Naive thymus-derived CD8-positive, alpha-beta T cell (primary cell): ENCODE measurements at regions of chr1 and their contacts with region 1.

Region 1: DNA sequence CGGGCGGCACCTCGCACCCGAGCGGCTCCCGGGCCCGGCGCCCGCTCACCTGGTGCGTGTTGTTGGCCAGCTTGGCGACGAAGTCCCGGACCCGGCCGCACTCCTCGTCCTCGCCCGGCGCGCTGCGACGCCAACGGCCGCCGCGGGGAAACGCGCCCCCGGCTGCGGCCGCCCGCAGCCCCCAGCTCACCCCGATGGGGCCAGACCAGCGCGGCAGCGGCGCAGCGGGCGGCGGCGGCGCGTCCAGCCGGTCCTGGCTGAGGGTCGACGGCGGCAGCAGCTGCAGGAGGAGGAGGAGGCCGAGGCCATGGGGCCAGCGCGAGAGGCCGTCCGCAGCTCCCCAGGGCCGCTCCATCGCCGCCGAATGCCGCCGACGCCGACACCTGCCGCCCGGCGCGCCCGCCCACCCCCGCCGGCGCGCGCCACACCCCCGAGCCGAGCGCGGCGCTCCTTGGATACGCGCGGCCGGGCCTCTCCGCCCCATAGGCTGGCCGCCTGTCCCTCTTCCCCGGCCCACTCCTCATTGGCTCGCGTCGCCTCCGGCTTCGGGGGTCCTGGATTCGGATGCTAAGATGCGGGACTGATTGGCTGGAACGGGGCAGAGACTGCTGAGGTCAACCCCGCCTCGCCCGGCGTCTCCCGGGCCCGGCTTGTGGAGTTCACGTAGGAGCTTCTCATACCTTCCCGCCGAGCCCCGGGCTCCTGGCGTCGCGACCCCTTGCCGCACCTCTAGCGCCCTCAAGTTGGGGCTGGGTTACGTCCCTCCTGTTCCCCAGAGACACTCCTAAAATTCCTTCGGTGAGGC is at the start of gene SORT1:
- DNase-seq: peak; percentile 46 to 86 (median 71)
- ATAC-seq: peak; percentile 97 to 99
- H3K4me3 Mint-ChIP-seq: peak within 1 kb of the TSS; percentile 81 to 93 (median 90)
- H3K27ac Mint-ChIP-seq: peak within 1 kb of the TSS in 6 of 10 donors; percentile 9 to 82 (median 62)
- H3K4me1 Mint-ChIP-seq: peaks cover 5 to 27% (median 18%) of the 10 kb centered on the region in 4 donors
- H3K27me3 Mint-ChIP-seq: peaks cover 18 to 41% (median 28%) of the 10 kb centered on the region in 5 donors
- polyA plus RNA-seq, gene SORT1: 0.43 to 1.6 (median 1.2) TPM

Region 2: DNA sequence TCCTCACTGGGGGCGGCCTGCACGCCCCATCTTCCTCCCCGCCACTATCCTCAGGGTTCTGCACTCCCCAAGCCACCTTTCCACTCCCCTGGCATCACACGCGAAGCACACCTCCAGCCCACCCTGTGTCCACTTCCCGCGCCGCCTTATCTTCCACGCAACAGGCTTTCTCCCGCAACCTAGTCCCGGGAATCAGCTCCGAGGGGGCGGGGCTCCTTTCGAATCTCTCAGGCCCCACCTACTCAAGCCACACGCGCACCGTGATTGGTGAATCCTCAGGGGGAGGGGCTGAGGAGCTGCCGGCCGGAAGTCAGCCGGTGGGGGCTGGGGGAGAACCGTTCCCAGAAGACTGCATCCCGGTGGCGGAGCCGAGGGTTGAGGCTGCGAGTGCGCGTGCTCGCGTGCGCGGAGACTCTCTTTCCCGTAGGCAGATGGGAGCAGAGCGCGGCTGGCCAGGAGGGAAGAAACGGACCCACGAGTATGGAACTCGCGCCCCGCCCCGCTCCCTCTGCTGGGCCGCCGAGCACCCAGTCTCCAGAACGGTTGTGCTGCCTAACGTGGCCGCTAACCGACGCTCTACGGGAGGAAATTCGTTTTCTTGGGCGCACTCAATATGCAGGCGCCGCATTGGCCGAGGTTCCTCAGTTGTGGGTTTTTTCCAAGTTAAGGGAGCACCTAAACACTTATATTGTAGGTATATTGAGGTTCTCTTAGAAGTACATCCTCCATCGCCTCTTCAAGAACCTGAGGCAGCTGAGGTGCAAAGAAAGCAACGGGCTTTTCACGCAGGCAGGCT is 114.6 kb before region 1 on chr1 and contains the start of gene PSRC1:
- POLR2A ChIA-PET with region 1: interaction called, 11 read pairs
- DNase-seq: peak; percentile 79 to 93 (median 86)
- ATAC-seq: peak; percentile 93 to 94
- H3K4me3 Mint-ChIP-seq: peak within 1 kb of the TSS; percentile 86 to 100 (median 98)
- H3K27ac Mint-ChIP-seq: peak within 1 kb of the TSS; percentile 42 to 96 (median 91)
- H3K4me1 Mint-ChIP-seq: peaks cover 3 to 23% (median 17%) of the 10 kb centered on the region in 4 donors
- H3K27me3 Mint-ChIP-seq: peaks cover 0 to 3% (median 0%) of the 10 kb centered on the region in 5 donors
- polyA plus RNA-seq, gene PSRC1: 0.89 TPM in 1 of 3 donors, not detected in the others

Region 3: DNA sequence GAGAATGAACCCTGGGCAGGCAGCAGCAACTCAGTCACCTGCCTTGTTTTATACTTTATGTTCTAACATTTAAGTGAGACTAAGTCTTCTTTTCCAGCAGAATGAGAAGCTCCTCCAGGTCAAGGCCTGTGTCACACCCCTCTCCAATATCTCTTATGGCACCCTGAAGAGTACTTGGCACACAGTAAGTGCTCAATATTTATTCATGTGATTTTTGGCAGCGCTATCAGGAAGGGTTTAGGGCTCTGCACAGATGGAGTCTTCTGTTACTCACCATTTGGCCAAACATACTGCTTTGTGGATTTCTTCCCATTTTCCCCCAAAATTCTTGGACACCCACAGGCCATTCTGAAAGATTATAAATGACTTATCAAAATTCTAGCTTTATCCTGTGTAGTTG is 47.1 kb before region 1 on chr1:
- POLR2A ChIA-PET with region 1: no interaction called
- DNase-seq: no peak
- ATAC-seq: no peak
- H3K4me3 Mint-ChIP-seq: no peak overlapping the region
- H3K27ac Mint-ChIP-seq: no peak overlapping the region
- H3K4me1 Mint-ChIP-seq: no peaks in the 10 kb centered on the region
- H3K27me3 Mint-ChIP-seq: no peaks in the 10 kb centered on the region

Region 4: GRCh38 chr1:109532365-109533136 is 134.8 kb after region 1 on chr1:
- POLR2A ChIA-PET with region 1: no interaction called
- DNase-seq: peak; percentile 80 to 97 (median 90)
- ATAC-seq: peak; percentile 85 to 91
- H3K4me3 Mint-ChIP-seq: peak overlapping the region; percentile 69 to 89 (median 85)
- H3K27ac Mint-ChIP-seq: peak overlapping the region; percentile 74 to 96 (median 93)
- H3K4me1 Mint-ChIP-seq: peaks cover 23 to 45% (median 33%) of the 10 kb centered on the region in 4 donors
- H3K27me3 Mint-ChIP-seq: no peaks in the 10 kb centered on the region